ENCODE measurements at regions of chr19 and their contacts with region 1.

Region 1: GRCh38 chr19:46704379-46705076 is 12.4 kb downstream of the PRKD2 start:
- DNase-seq: peak; percentile 73
- H3K4me3 ChIP-seq: no peak overlapping the region
- H3K27ac ChIP-seq: no peak overlapping the region
- H3K4me1 ChIP-seq: no peaks in the 10 kb centered on the region
- CTCF ChIP-seq: peak; percentile 93

Region 2: DNA sequence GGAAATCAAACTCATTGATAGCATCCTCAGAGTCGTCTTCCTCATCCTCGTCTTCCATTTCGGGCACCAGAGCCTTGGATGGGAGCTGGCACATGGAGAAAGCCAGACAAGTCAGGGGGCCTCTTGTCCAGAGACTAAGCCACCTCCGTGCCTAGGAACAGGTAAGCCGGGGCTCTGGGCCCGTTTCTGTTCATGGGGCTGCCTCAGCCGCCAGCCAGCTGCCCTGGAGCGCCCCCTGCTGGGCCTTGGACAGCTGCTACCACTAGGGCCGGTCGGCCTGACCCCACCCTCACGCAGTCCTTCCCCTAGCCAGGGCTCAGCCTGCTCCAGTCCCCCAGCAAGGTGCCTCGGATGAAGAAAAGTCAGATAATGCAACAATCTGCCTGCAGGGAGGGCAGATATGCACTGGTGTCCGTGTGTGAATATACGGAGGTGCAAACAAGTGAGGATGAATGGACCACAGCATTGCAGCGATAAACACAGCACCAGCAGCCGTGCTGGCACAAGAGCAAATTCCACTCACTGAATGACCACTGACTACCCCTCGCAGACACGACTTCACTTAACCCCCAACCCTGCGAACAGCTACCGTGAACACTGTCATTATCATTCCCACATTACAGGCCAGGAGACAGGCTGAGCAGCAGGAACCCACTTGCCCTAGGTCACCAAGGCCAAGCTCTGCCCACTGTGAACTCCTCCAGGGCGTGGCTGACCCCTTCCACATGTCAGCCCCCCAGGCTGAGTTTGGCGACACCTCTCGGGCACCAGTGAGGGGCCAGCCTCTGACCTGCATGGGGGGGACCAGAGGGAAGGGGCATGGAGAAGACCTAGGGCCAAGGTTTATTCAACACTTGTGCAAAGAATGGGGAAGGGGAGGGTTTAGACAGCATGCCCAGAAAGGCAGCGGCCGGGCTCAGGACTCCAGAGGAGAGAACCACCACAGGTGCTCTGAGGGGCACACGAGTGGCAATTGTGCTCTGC is 24.5 kb after region 1 on chr19:
- CTCF ChIA-PET with region 1: interaction called, 8 read pairs
- POLR2A ChIA-PET with region 1: interaction called, 4 read pairs
- intact Hi-C with region 1: loop called (anchors 1 kb)
- DNase-seq: peak; percentile 78
- H3K4me3 ChIP-seq: no peak overlapping the region
- H3K27ac ChIP-seq: no peak overlapping the region
- H3K4me1 ChIP-seq: no peaks in the 10 kb centered on the region
- CTCF ChIP-seq: peak; percentile 97

Measured in OCI-LY7 (cell line).